ENCODE measurements at regions of chr6 and their contacts with region 1.

Region 1: GRCh38 chr6:13336553-13336952 is 8.2 kb upstream of the TBC1D7 start:
- DNase-seq: peak; percentile 74
- H3K4me3 ChIP-seq: no peak overlapping the region
- H3K27ac ChIP-seq: no peak overlapping the region
- H3K4me1 ChIP-seq: peaks cover 25% of the 10 kb centered on the region
- CTCF ChIP-seq: peak; percentile 96

Region 2: DNA sequence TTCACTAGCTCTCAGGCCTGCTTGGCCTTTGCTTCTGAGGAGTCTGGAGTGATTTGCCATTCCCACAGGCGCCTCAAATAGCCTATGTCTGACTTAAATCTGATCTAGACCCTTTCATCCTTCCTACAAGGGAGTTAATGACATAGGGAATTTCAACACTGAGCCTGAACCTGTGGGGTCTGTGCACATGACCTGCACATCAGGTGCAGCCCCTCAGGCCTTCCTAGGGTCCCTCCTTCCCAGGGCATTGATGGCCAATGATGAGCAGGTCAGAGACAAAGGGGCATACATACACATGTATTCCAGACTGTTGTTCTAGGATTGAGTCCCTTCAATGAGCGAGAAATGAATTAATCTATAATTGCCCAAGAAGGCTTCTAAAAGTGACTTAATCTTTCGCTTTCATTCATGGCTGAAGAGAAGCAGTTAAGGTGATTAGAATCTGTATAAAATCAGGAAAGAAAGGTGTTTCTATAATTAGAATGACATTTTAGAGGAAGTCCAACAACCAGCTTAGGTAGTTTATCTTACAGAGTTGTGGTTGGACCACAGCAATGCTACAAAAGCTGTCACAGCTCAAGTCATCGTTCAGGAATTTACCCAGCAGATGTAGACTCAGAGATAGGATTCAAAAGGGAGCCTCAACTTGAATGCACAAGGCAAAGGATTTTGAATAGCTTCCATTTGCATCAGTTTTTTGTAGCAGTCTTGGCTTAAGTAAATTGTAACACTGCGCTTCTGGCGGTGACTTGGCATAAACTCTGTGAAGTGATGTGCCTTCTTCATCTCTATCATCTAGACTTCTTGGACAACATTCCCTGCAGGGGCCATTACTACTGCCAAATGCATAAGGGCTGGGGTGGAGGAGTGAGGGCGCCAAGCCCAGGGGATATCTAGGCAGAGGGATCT is 18.7 kb after region 1 on chr6:
- CTCF ChIA-PET with region 1: no interaction called
- POLR2A ChIA-PET with region 1: interaction called, 12 read pairs
- intact Hi-C with region 1: no loop called
- DNase-seq: peak; percentile 45
- H3K4me3 ChIP-seq: peak overlapping the region; percentile 54
- H3K27ac ChIP-seq: peak overlapping the region; percentile 89
- H3K4me1 ChIP-seq: peaks cover 58% of the 10 kb centered on the region
- CTCF ChIP-seq: no peak

Region 3: DNA sequence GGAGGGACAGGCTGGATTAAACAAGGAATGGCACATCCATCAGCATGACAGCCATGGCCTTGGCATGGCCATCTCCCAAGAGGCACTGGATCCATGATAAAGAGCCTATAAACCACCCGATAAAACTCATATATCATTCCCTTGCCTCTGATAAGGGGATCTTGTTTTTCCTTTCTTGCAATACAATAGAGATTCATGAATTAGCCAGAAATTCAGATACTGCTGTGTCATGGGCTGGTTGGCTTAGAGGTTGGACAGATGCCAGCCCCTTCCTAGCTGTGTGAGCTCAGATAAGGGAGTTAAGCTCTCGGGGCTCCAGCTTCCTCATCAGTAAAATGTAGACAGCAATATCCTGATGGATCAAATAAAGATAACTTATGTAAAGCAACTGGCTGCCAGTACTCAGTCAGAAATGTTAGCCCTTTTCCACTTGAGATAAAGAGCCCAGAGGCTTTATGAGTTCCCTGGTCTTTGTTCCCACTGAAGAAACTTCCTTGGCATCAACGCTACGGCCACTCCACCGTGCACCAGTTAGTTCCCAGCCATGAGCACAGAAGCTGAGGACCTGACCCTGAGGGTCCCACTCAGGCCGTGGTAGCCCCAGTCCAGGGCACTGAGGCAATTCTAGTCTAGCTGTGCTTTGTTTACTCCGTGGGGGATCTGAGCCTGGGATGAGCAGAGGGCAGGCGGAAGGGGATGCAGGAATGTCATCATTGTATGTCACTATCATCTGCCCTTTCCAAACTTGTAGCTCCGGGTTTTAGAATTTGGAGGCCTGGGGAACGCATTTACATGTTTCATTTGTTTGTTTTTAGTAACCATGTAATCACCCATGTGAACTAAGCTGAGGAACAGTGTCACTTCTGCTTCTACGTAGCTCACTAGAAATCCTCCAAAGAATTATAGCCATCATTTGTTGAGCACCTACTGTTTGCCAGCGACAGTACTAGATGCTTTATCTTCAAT is 59.0 kb after region 1 on chr6:
- CTCF ChIA-PET with region 1: no interaction called
- POLR2A ChIA-PET with region 1: interaction called, 4 read pairs
- intact Hi-C with region 1: loop called (anchors 5 kb)
- DNase-seq: peak; percentile 32
- H3K4me3 ChIP-seq: peak overlapping the region; percentile 46
- H3K27ac ChIP-seq: no peak overlapping the region
- H3K4me1 ChIP-seq: peaks cover 73% of the 10 kb centered on the region
- CTCF ChIP-seq: no peak

Region 4: GRCh38 chr6:13487122-13488014 is 150.8 kb after region 1 on chr6 and contains the start of gene GFOD1:
- CTCF ChIA-PET with region 1: no interaction called
- POLR2A ChIA-PET with region 1: interaction called, 4 read pairs
- intact Hi-C with region 1: loop called (anchors 1 kb)
- DNase-seq: peak; percentile 91
- H3K4me3 ChIP-seq: peak within 1 kb of the TSS; percentile 74
- H3K27ac ChIP-seq: peak within 1 kb of the TSS; percentile 70
- H3K4me1 ChIP-seq: peaks cover 30% of the 10 kb centered on the region
- CTCF ChIP-seq: no peak
- total RNA-seq, gene GFOD1: 19.7 and 22.6 TPM in 2 replicates

Region 5: GRCh38 chr6:13538084-13538483 is 201.5 kb after region 1 on chr6:
- CTCF ChIA-PET with region 1: interaction called, 5 read pairs
- POLR2A ChIA-PET with region 1: interaction called, 4 read pairs
- intact Hi-C with region 1: loop called (anchors 1 kb)
- DNase-seq: peak; percentile 69
- H3K4me3 ChIP-seq: no peak overlapping the region
- H3K27ac ChIP-seq: no peak overlapping the region
- H3K4me1 ChIP-seq: peaks cover 65% of the 10 kb centered on the region
- CTCF ChIP-seq: peak; percentile 85

Region 6: DNA sequence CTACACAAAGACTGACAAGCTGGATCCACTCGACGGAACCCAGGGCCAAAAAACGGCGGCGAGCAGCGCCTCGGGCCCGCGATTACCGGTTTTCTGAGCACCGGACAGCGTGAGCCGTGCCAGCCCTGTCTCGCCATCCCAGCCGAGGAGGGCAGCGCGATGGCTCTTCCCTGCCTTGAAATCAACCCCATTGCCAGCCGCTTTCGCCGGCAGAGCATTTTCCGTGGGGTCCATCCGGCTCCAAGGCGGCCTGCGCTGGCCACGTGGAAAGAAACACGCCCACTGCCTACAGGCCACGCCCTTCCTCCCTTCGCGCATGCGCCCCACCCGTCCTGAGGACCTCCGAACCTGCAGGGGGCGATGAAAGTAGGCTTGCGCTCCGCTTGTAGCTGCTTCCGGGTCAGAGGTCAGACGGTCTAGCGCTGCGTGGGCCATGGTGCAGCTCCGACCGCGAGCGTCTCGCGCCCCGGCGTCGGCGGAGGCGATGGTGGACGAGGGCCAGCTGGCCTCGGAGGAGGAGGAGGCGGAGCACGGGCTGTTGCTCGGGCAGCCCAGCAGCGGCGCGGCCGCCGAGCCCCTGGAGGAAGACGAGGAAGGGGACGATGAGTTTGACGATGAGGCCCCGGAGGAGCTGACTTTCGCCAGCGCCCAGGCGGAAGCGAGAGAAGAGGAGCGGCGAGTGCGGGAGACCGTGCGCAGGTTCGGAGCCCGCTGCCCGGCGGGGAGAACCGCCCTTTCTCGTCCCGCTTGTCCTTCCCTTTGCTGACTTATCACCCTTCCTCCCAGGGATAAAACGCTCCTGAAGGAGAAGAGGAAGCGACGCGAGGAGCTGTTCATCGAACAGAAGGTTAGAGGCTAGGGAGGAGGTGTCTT is 278.6 kb after region 1 on chr6 and contains the start of gene NOL7:
- CTCF ChIA-PET with region 1: no interaction called
- POLR2A ChIA-PET with region 1: interaction called, 7 read pairs
- intact Hi-C with region 1: loop called (anchors 1 kb)
- DNase-seq: peak; percentile 99
- H3K4me3 ChIP-seq: peak within 1 kb of the TSS; percentile 98
- H3K27ac ChIP-seq: peak within 1 kb of the TSS; percentile 73
- H3K4me1 ChIP-seq: peaks cover 54% of the 10 kb centered on the region
- CTCF ChIP-seq: peak; percentile 81
- total RNA-seq, gene NOL7: 67.5 and 92.4 TPM in 2 replicates

Region 7: DNA sequence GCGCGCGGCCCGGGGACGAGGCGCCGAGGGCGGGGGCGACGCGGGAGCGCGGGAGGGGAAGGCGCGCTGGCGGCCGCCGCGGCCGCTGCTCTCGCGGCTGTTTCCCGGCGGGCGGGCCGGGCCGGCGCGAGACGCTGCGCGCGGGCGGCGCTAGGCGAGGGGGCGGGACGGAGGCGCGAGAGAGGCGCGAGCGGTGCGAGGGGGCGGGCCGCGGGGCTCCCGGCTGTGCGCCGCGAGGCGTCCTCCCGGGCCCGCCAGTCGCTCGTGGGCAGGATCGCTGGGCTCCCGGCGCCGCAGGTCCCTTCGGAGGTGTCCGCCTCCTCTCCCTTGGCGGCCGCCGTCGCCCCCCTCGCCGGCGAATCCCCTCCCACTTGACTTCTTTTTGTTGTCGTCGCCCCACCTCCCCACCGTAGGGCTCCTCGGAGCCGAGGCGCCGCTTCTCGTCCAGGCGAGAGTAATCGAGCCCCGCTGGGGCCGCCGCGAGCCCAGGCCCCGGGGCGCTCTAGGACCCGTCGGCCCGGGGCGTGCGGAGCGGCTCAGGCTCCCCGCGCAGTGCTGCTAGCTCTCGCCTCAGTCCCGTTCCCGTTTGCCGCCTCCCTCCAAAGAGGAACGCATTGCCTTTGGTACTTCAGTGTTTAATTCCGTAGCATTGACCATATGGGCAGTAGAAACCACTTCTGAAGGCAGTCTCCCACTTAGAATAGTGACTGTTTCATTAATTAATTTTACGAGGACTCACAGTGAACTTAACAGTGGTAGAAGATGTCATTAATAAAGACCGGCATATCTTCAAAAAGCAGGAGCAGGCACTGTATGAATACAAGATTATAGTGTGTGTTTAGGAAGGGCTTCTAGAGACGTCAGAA is 375.4 kb after region 1 on chr6 and contains the start of gene RANBP9:
- CTCF ChIA-PET with region 1: no interaction called
- POLR2A ChIA-PET with region 1: no interaction called
- intact Hi-C with region 1: loop called (anchors 5 kb)
- DNase-seq: peak; percentile 95
- H3K4me3 ChIP-seq: peak within 1 kb of the TSS; percentile 74
- H3K27ac ChIP-seq: peak within 1 kb of the TSS; percentile 78
- H3K4me1 ChIP-seq: peaks cover 20% of the 10 kb centered on the region
- CTCF ChIP-seq: no peak
- total RNA-seq, gene RANBP9: 20.5 and 22.2 TPM in 2 replicates

Measured in OCI-LY7 (cell line).